ENCODE measurements at regions of chr6 and their contacts with region 1.

Region 1: DNA sequence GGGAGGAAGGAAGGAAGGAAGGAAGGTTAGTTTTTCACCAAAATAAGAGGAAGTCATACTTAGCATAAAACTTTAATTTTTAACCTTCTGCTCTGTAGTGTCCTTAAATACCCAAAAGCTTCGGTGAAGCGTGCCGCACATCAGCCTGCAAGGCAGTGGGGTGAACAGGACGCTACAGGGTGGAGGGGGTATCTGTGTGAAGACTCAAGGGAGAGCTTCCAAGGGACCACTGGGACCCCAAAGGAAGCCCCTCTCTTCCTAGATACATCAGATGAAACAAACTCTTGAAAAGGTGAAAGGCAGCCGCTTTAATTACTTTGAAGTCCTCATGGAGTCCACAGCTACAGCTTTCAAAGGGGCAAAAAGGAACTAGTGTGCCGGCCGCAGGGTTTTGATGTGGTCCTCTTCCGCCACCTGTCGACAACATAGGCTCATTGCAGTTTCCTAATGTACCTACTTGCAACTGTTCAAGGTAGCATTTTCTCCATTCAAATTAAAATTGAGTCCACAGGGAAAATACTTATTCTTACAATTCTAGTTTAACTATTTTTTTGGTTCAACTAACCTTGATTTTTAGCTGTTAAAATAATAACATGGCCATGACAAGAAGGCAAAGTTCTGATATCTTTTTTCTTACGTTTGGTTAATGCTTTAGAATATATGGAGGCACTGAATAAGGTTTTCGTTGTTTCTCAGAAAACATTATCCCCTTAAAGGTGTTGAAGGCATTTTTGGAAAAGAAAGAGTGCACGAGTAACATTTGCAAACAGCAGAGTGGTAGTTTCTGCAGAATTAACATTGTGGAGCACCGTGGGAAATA is 135.0 kb upstream of the RIPOR2 start:
- DNase-seq: no peak
- H3K4me3 ChIP-seq: no peak overlapping the region
- CTCF ChIP-seq: peak; percentile 80

Region 2: GRCh38 chr6:23828861-23829260 is 1241.9 kb before region 1 on chr6:
- CTCF ChIA-PET with region 1: no interaction called
- POLR2A ChIA-PET with region 1: no interaction called
- DNase-seq: no peak
- H3K4me3 ChIP-seq: no peak overlapping the region
- CTCF ChIP-seq: no peak

Region 3: GRCh38 chr6:25017932-25018567 is 52.7 kb before region 1 on chr6:
- CTCF ChIA-PET with region 1: interaction called, 14 read pairs
- POLR2A ChIA-PET with region 1: no interaction called
- DNase-seq: no peak
- H3K4me3 ChIP-seq: no peak overlapping the region
- CTCF ChIP-seq: peak; percentile 30

Region 4: DNA sequence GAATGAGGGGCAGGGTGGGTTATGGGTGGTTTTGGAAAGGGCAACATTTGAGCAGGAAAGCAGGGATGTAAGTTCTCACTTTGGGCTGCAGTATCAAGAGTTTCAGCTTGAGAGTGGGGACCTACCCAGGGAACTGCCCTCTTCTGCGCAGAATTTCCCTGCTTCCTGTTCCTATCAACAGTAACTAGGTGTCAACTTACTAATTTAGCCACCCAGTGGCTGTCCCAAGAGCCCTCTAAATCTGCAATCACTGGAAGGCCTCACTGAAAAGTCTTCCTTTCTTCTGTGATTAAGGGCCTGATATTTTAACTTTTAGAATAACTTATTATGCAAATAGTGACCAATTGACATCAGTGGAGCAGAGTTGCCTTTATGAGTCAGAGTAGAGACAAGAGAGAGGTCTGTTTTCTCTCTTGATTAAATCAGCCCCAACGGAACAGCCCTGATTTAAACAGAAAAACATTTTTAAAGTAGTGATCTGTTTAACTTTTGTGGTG is 16.8 kb before region 1 on chr6:
- CTCF ChIA-PET with region 1: interaction called, 18 read pairs
- POLR2A ChIA-PET with region 1: no interaction called
- DNase-seq: no peak
- H3K4me3 ChIP-seq: 0 out of 2 replicates have a peak overlapping the region, but pooled peaks have one; percentile 6
- CTCF ChIP-seq: no peak

Region 5: GRCh38 chr6:25088513-25088912 is 17.8 kb after region 1 on chr6:
- CTCF ChIA-PET with region 1: interaction called, 13 read pairs
- POLR2A ChIA-PET with region 1: no interaction called
- DNase-seq: no peak
- H3K4me3 ChIP-seq: no peak overlapping the region
- CTCF ChIP-seq: no peak